Activated naive CD4-positive, alpha-beta T cell treated with anti-CD3 and anti-CD28 coated beads for 36 hours (primary cell): ENCODE measurements at regions of chr2 and their contacts with region 1.

Region 1: DNA sequence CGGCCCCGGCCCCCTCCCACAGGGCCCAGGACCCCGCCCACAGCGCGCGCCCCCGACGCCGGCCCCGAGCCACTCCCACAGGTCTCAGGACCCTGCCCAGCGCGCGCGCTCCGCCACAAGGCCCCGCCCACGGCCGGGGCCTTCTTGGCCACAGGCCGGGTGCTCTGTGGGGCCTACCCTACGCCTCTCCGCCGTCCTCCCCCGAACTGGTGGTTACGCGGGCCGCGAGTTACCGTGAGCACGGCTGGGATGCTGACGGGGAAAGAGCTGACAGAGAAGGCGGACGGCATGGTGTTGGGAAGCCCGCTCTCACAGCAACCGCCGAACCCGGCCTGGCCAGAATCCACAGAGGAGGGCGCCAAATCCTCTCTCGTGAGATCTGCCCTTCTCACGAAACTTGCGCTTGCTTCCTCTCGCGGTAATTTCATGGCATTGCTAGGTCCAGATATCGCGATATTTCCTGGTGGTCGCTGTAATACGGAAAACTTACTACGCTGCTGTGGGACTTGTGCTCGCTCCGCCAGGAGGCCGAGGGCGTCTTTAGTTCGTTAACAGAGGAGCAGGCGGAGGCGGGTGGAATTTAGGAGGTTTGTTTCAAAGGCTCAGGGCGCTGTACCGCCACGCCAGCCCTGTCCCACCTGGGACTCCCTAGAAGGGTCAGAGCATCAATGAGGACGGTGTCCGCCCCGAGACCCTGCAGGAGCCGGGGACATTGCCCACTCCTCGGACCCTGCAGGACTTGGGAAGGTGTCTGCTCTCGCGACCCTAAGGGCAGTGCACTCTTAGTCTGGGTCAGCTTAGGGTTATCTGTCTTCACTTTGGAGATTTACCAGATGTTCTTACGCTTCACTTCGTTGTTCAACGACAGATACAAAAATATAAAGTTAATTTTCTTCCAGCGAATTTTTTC is at the start of gene TMEM18:
- DNase-seq: peak; percentile 95
- H3K4me3 Mint-ChIP-seq: peak within 1 kb of the TSS; percentile 94
- H3K27ac Mint-ChIP-seq: peak within 1 kb of the TSS; percentile 97
- H3K4me1 Mint-ChIP-seq: peaks cover 44% of the 10 kb centered on the region
- H3K27me3 Mint-ChIP-seq: no peaks in the 10 kb centered on the region
- total RNA-seq, gene TMEM18: 22.4 to 25.1 TPM

Region 2: DNA sequence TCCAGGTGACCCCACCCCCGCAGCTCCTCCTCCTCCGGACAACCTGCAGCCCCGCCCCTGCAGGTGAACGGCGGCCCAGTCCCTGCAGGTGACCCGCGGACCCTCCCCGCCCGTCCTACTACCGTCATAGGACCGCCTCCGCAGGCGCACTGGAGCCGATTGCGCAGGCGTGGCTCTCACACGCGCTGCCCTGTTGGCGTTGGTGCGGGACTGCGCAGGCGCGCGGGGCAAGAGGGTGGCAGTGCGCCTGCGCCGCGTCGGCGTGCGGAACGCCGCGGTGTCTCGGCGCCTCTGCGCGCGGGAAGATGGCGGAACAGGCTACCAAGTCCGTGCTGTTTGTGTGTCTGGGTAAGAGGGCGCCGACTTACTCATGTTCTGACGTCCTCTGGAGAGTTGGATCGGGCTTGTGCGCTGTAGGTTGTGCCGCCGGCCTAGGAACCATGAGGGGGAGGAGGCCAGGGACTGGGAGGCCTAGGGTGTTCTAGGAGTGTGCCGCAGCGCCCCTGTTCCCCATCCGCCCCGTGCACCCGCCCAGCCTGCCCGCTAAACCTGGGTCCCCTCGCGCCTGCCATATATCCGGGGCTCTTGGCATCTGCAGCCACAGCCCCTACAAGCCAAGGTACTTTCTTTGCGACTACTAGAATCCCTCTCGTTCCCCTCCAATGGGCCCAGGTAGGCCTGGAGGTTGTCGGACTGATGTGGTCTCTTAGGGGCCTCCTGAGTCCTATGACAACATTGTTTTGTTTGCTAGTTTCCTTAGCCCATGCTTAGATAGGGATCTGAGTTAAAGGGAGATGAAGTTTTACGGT is 412.4 kb before region 1 on chr2 and contains the start of gene ACP1:
- CTCF ChIA-PET with region 1: no interaction called
- intact Hi-C with region 1: loop called (anchors 1 kb)
- DNase-seq: peak; percentile 94
- H3K4me3 Mint-ChIP-seq: peak within 1 kb of the TSS; percentile 91
- H3K27ac Mint-ChIP-seq: peak within 1 kb of the TSS; percentile 90
- H3K4me1 Mint-ChIP-seq: peaks cover 40% of the 10 kb centered on the region
- H3K27me3 Mint-ChIP-seq: no peaks in the 10 kb centered on the region
- total RNA-seq, gene ACP1: 144 to 147 TPM

Region 3: DNA sequence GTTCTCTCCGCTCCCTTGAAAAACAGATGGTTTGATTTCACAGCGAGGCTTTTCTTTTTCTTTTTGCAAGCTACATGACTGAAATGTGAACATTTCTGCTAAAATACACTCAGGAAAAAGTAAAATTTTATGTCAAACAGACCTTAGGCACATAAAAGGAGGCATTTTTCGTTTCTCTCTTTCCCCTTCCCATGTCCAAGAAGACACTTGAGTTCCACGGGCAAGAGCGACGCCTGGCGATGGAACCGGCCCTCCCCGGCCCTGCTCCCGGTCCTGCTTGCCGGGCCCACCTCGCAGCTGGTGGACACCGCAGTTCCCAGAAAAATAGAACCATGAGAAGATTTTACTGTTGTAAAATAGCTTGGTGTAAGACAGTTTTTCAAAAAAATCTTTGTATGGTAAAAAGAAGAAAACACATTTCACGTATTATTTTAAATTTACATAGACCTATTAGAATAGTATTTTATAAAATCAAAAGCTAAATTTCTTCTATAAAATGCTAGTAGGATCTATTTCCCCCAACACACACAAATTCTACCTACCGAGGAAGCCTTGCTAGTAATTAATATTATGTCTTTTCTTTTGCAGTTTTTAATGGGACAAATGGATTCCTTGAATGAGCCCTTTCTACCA is 387.1 kb before region 1 on chr2:
- CTCF ChIA-PET with region 1: no interaction called
- intact Hi-C with region 1: loop called (anchors 5 kb)
- DNase-seq: peak; percentile 73
- H3K4me3 Mint-ChIP-seq: peak overlapping the region; percentile 66
- H3K27ac Mint-ChIP-seq: no peak overlapping the region
- H3K4me1 Mint-ChIP-seq: peaks cover 2% of the 10 kb centered on the region
- H3K27me3 Mint-ChIP-seq: peaks cover 28% of the 10 kb centered on the region

Region 4: GRCh38 chr2:854460-854859 is 177.1 kb after region 1 on chr2:
- CTCF ChIA-PET with region 1: no interaction called
- intact Hi-C with region 1: loop called (anchors 5 kb)
- DNase-seq: peak; percentile 73
- H3K4me3 Mint-ChIP-seq: no peak overlapping the region
- H3K27ac Mint-ChIP-seq: no peak overlapping the region
- H3K4me1 Mint-ChIP-seq: peaks cover 19% of the 10 kb centered on the region
- H3K27me3 Mint-ChIP-seq: no peaks in the 10 kb centered on the region

Region 5: DNA sequence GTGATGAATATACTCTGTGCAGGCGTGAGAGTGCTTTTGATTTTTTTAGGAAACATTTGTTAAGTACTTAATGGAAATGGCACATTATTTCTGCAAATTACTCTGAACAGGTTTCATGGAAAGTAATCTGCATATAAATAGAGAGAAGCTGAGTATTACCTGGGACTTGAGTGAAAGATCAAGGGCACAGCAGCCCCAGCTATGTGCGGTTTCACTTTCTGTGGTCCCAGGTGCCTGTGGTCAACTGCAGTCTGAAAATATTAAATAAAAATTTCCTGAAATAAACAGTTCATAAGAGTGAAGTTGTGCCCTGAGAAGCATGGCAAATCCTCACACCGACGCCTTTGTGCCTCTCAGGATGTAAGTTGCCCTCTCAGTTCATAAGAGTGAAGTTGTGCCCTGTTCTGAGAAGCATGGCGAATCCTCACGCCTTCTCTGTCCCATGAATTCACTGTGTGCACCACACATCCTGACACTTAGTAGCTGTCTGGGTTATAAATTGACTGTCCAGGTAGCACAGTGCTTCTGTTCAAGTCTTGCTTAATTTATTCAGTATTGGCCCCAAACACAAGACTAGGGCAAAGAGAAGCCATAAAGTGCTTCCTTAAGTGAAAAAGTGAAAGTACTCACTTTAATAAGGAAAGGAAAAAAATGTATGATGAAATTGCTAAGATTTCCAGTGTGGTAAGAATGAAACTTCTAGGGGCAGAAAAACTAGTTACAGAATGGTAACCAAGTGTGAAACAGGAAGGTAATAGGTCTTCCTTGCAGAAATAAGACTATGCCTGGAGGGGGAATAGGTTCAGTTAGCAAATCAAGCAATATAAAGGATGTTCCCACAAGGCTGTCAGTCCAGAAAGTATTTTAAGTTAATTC is 269.0 kb after region 1 on chr2:
- CTCF ChIA-PET with region 1: no interaction called
- intact Hi-C with region 1: loop called (anchors 2 kb)
- DNase-seq: peak; percentile 30
- H3K4me3 Mint-ChIP-seq: peak overlapping the region; percentile 42
- H3K27ac Mint-ChIP-seq: peak overlapping the region; percentile 84
- H3K4me1 Mint-ChIP-seq: peaks cover 28% of the 10 kb centered on the region
- H3K27me3 Mint-ChIP-seq: peaks cover 10% of the 10 kb centered on the region

Region 6: GRCh38 chr2:1162768-1163584 is 485.7 kb after region 1 on chr2:
- CTCF ChIA-PET with region 1: no interaction called
- intact Hi-C with region 1: loop called (anchors 2 kb)
- DNase-seq: peak; percentile 77
- H3K4me3 Mint-ChIP-seq: no peak overlapping the region
- H3K27ac Mint-ChIP-seq: peak overlapping the region; percentile 92
- H3K4me1 Mint-ChIP-seq: peaks cover 41% of the 10 kb centered on the region
- H3K27me3 Mint-ChIP-seq: no peaks in the 10 kb centered on the region